CD8-positive, alpha-beta T cell (primary cell): ENCODE measurements at regions of chrX and their contacts with region 1.

Region 1: DNA sequence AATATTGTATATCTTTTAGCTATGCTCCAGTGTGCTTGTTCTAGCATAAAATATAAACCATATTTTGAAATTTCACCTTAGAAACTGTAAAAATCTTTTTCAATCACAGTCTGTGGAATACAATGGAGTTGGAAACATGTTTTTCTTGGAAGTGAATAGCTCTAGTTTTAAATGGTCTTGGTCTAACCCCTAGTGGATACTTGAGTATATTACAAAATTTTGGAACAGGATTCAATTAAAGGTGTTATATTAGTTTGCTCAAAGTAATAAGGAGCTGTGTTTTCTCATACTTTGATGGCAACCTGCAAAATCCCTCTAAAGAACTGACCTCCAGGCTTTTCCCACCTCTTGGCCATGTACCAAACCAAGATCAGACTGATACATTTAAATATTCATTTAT is 48.2 kb downstream of the STK26 start:
- DNase-seq: peak in 2 of 9 experiments; percentile 3 to 17
- ATAC-seq: no peak
- H3K4me3 ChIP-seq: no peak overlapping the region
- H3K4me3 Mint-ChIP-seq: no peak overlapping the region
- H3K27ac ChIP-seq: no peak overlapping the region
- H3K27ac Mint-ChIP-seq: no peak overlapping the region
- H3K4me1 ChIP-seq: no peaks in the 10 kb centered on the region
- H3K4me1 Mint-ChIP-seq: peaks cover under 1% of the 10 kb centered on the region
- H3K27me3 ChIP-seq: no peaks in the 10 kb centered on the region
- H3K27me3 Mint-ChIP-seq: no peaks in the 10 kb centered on the region
- CTCF ChIP-seq: peak; percentile 34

Region 2: GRCh38 chrX:131763674-131764073 is 307.6 kb before region 1 on chrX:
- CTCF ChIA-PET with region 1: no interaction called
- POLR2A ChIA-PET with region 1: no interaction called
- intact Hi-C with region 1: no loop called
- DNase-seq: peak in 2 of 9 experiments; percentile 84 to 85
- ATAC-seq: no peak
- H3K4me3 ChIP-seq: no peak overlapping the region
- H3K4me3 Mint-ChIP-seq: no peak overlapping the region
- H3K27ac ChIP-seq: no peak overlapping the region
- H3K27ac Mint-ChIP-seq: no peak overlapping the region
- H3K4me1 ChIP-seq: no peaks in the 10 kb centered on the region
- H3K4me1 Mint-ChIP-seq: no peaks in the 10 kb centered on the region
- H3K27me3 ChIP-seq: no peaks in the 10 kb centered on the region
- H3K27me3 Mint-ChIP-seq: no peaks in the 10 kb centered on the region
- CTCF ChIP-seq: no peak

Region 3: DNA sequence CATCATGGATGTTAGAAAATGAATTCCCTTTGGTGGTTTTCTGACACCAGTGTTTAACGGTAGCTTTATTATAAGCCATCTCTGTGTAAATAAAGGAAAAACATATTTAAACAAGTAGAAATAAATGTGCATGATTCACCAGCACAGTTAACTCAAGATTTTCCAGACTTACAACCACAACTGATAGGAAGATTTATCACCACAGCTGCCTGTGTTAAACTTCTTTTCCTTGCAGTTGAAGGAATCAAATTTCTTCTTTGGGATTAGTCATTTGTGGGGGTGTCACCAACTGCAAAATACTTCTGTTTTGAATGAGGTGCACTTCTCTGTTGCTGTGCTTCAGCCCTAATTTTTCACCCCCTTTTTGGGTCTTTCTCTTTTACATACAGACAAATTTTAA is 176.3 kb before region 1 on chrX:
- CTCF ChIA-PET with region 1: no interaction called
- POLR2A ChIA-PET with region 1: no interaction called
- intact Hi-C with region 1: loop called in 1 of 2 experiments (anchors 5 kb)
- DNase-seq: no peak
- ATAC-seq: no peak
- H3K4me3 ChIP-seq: no peak overlapping the region
- H3K4me3 Mint-ChIP-seq: no peak overlapping the region
- H3K27ac ChIP-seq: no peak overlapping the region
- H3K27ac Mint-ChIP-seq: no peak overlapping the region
- H3K4me1 ChIP-seq: no peaks in the 10 kb centered on the region
- H3K4me1 Mint-ChIP-seq: no peaks in the 10 kb centered on the region
- H3K27me3 ChIP-seq: no peaks in the 10 kb centered on the region
- H3K27me3 Mint-ChIP-seq: no peaks in the 10 kb centered on the region
- CTCF ChIP-seq: no peak

Region 4: DNA sequence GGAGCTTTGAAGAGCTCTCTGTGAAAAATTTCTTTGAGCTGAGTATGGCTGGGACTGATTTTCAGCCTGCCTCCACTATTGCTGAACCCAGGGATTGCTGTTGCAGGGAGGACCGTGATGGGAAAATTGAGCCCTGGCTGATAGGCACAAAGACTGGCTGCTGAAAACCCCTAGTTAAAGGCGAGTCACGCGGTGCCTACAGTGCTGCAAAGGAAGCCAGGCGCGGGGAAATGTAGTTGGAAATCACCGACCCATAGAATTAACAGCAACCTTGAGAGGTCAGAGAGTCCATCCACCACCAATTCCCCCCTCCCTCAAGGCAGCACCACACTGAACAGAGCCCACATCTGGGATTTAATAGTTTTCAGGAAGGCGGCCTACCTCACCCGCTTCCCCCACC is 30.5 kb after region 1 on chrX:
- CTCF ChIA-PET with region 1: no interaction called
- POLR2A ChIA-PET with region 1: no interaction called
- intact Hi-C with region 1: no loop called
- DNase-seq: no peak
- ATAC-seq: no peak
- H3K4me3 ChIP-seq: no peak overlapping the region
- H3K4me3 Mint-ChIP-seq: no peak overlapping the region
- H3K27ac ChIP-seq: no peak overlapping the region
- H3K27ac Mint-ChIP-seq: no peak overlapping the region
- H3K4me1 ChIP-seq: no peaks in the 10 kb centered on the region
- H3K4me1 Mint-ChIP-seq: no peaks in the 10 kb centered on the region
- H3K27me3 ChIP-seq: no peaks in the 10 kb centered on the region
- H3K27me3 Mint-ChIP-seq: no peaks in the 10 kb centered on the region
- CTCF ChIP-seq: no peak

Region 5: DNA sequence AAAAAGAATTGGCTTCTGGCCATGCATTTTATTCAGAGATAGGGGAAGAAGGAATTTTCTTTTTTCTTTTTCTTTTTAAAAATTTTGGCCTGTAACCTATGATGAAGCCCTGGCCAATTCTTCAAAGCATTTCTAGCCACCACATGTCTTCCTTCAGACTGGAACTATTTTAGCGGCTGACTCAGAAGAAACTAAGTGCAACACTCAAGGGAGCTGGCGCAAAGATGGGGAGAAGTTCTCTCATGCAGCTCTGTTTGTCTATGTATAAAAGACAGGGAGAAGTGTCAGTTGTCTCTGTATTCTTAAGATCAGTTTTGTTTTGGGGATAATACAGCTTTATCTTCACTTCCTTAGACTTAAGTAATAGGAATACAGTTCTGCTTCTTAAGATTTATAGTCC is 371.4 kb after region 1 on chrX:
- CTCF ChIA-PET with region 1: no interaction called
- POLR2A ChIA-PET with region 1: no interaction called
- intact Hi-C with region 1: no loop called
- DNase-seq: no peak
- ATAC-seq: no peak
- H3K4me3 ChIP-seq: no peak overlapping the region
- H3K4me3 Mint-ChIP-seq: no peak overlapping the region
- H3K27ac ChIP-seq: no peak overlapping the region
- H3K27ac Mint-ChIP-seq: no peak overlapping the region
- H3K4me1 ChIP-seq: no peaks in the 10 kb centered on the region
- H3K4me1 Mint-ChIP-seq: peaks cover 9% of the 10 kb centered on the region
- H3K27me3 ChIP-seq: no peaks in the 10 kb centered on the region
- H3K27me3 Mint-ChIP-seq: no peaks in the 10 kb centered on the region
- CTCF ChIP-seq: no peak

Region 6: GRCh38 chrX:133645977-133646718 is 1574.9 kb after region 1 on chrX:
- CTCF ChIA-PET with region 1: no interaction called
- POLR2A ChIA-PET with region 1: no interaction called
- intact Hi-C with region 1: no loop called
- DNase-seq: peak in 1 of 9 experiments; percentile 6
- ATAC-seq: no peak
- H3K4me3 ChIP-seq: no peak overlapping the region
- H3K4me3 Mint-ChIP-seq: no peak overlapping the region
- H3K27ac ChIP-seq: no peak overlapping the region
- H3K27ac Mint-ChIP-seq: no peak overlapping the region
- H3K4me1 ChIP-seq: no peaks in the 10 kb centered on the region
- H3K4me1 Mint-ChIP-seq: no peaks in the 10 kb centered on the region
- H3K27me3 ChIP-seq: no peaks in the 10 kb centered on the region
- H3K27me3 Mint-ChIP-seq: no peaks in the 10 kb centered on the region
- CTCF ChIP-seq: no peak